ENCODE measurements at regions of chr12 and their contacts with region 1.

Region 1: DNA sequence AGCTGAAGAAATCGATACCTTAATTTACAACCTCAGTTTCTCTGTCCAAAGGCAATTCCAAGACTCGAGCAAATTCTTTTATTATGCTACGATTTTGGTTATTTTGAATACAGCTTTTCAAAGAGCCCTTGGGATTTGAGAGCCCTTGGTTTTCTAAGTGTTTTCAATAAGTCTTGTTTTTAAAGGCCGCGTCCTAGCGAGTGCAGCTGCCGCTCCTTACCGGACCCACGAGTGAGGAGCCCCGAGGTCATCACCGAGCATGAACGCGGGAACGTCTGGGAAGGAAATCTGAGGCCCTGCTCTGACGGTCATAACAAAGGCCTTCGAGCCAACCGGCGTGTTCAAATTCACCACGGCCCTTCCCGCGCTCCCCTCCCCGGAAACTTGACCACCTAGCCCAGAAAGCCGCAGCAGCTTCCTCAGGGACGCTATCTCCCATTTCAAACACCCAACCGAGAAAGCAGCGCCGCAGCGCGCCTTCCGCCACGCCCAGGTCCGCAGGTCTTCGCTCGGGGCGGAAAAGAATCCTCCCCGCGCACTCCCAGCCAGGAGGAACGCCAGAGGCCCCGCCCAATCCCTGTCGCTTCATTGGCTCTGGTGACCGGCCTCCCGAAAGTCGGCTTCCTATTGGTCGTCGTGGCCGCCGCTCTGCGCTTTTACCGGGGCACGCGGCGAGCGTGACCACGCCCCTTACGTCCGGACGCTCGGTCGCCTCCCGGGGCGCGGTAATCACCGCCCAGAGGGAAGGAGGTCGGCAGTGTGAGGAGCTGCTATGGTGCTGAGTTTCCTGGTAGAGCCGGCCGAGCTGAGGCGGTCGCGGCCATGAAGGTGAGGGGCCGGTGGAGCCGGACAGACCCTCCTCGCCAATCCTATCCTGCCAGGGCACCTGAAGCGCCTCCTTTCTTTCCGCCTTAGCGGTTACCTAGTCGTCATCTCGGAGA is at the start of gene RNF34:
- DNase-seq: peak; percentile 98 to 99
- H3K4me3 ChIP-seq: peak within 1 kb of the TSS; percentile 69 to 70
- H3K27ac ChIP-seq: peak within 1 kb of the TSS; percentile 85 to 86
- H3K4me1 ChIP-seq: peaks cover 0 to 27% (median 14%) of the 10 kb centered on the region in 4 donors
- H3K27me3 ChIP-seq: peaks cover 0 to 3% of the 10 kb centered on the region in 2 donors
- CTCF ChIP-seq: no peak

Region 2: GRCh38 chr12:121351820-121352681 is 47.6 kb before region 1 on chr12 and contains the start of gene ANAPC5:
- intact Hi-C with region 1: loop called (anchors 5 kb)
- DNase-seq: peak; percentile 98 to 99
- H3K4me3 ChIP-seq: peak within 1 kb of the TSS; percentile 77 to 79
- H3K27ac ChIP-seq: peak within 1 kb of the TSS; percentile 77 to 87
- H3K4me1 ChIP-seq: peaks cover 0 to 19% (median 12%) of the 10 kb centered on the region in 4 donors
- H3K27me3 ChIP-seq: no peaks in the 10 kb centered on the region
- CTCF ChIP-seq: no peak